Mammary epithelial cell (primary cell): ENCODE measurements at regions of chr7 and their contacts with region 1.

Region 1: DNA sequence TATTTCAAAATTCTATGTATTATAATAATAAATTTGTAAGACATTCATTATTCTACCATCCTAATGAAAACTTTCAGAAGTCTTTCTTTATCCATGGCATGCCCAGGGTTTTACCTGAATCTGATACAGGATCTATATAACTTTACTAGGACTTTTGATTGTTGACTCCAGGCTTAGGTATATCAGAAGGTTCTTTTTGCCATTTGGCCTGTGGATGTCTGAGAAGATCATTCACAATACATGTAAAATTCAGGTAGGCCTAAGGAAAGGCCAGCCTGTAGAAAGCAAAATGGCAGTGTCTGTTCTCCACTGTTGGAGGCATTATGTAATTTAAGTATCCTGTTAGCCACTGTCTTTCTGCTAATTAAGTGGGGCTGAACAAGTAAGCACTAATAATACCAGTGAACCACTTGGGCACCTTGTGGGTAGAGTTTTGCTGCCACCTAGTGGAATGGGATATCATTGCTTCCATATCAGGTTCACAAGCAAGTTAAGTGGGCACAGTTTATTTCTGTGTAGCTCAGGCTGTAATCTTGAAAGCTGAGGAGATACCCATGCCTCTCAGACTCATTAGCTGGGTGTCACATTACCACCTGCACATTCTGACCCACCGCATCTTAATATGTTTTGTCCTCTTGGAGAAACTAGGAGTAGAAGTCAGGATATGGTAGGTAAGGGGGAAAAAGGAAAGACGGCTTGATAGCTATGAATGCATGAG is 105.5 kb downstream of the SEPTIN7 start:
- DNase-seq: peak; percentile 54
- H3K4me3 ChIP-seq: no peak overlapping the region
- H3K27ac ChIP-seq: no peak overlapping the region
- H3K4me1 ChIP-seq: peaks cover 10% of the 10 kb centered on the region
- H3K27me3 ChIP-seq: no peaks in the 10 kb centered on the region
- CTCF ChIP-seq: peak; percentile 88 to 90

Region 2: DNA sequence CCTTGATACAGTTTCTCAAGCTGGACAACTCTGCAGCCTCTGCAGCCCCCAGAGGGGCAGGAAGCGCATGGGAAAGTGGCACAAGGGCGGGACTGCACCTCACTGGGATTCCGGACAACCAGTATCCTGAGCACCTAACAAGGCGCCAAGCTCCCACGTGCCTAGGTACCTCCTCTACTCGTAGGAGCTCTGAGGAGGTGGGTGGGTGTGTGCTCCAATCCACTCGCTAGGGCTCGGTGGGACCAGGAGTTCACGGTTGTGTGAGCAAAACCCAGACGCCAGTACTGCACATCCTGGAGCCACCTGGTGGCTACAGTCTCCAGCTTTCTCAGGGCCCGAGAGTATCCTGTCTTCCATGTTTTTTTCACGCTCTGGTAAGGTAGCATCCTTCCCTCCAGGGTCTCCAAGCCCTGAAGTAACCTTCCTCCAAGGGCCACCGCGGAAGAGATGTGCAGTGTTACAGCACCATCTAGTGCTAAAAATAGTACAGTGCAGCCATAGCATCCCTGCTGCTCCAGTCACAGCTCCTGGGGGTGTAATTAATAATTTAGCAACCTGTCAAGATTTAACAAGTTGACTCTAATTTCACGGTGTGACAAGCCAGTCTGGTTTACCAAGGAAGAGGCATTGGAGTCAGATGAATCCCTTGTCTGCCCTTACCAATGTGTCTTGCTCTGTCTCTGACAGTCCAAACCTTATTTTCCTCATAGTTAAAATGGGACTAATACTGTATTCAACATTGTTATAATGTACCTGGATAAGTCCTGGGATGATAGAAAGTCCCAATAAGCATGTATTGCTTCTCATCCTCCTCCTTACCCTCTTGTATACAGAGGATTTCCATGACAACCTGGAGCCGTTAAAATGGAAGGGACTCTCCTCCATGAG is 281.8 kb before region 1 on chr7:
- CTCF ChIA-PET with region 1: no interaction called
- dilution Hi-C with region 1: no loop called
- in situ Hi-C with region 1: no loop called
- intact Hi-C with region 1: loop called (anchors 5 kb)
- DNase-seq: peak; percentile 19
- H3K4me3 ChIP-seq: no peak overlapping the region
- H3K27ac ChIP-seq: no peak overlapping the region
- H3K4me1 ChIP-seq: no peaks in the 10 kb centered on the region
- H3K27me3 ChIP-seq: no peaks in the 10 kb centered on the region
- CTCF ChIP-seq: peak; percentile 82 to 84

Region 3: DNA sequence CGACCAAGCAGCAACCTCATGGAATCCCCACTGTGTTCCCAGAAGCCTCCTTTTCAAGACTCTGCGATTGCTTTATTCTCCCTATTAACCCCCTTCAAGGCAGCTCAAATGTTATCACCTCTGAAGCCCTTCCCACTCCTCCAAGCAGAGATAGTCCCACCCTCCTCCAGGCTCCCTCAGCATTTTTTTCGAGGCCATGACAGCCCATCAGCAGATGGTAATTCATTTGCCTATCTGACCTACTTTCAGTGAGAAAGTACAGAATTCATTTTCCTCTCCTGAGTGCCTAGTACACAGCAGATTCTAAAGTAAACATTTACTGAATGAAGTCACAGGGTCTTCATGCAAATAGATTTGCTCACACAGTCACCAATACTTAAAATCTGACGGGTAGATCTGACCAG is 259.2 kb before region 1 on chr7:
- CTCF ChIA-PET with region 1: no interaction called
- dilution Hi-C with region 1: no loop called
- in situ Hi-C with region 1: no loop called
- intact Hi-C with region 1: loop called (anchors 5 kb)
- DNase-seq: no peak
- H3K4me3 ChIP-seq: no peak overlapping the region
- H3K27ac ChIP-seq: no peak overlapping the region
- H3K4me1 ChIP-seq: no peaks in the 10 kb centered on the region
- H3K27me3 ChIP-seq: no peaks in the 10 kb centered on the region
- CTCF ChIP-seq: no peak

Region 4: GRCh38 chr7:35707422-35707821 is 198.9 kb before region 1 on chr7:
- CTCF ChIA-PET with region 1: no interaction called
- dilution Hi-C with region 1: no loop called
- in situ Hi-C with region 1: loop called (anchors 5 kb)
- intact Hi-C with region 1: loop called (anchors 1 kb)
- DNase-seq: no peak
- H3K4me3 ChIP-seq: no peak overlapping the region
- H3K27ac ChIP-seq: no peak overlapping the region
- H3K4me1 ChIP-seq: no peaks in the 10 kb centered on the region
- H3K27me3 ChIP-seq: no peaks in the 10 kb centered on the region
- CTCF ChIP-seq: no peak

Region 5: DNA sequence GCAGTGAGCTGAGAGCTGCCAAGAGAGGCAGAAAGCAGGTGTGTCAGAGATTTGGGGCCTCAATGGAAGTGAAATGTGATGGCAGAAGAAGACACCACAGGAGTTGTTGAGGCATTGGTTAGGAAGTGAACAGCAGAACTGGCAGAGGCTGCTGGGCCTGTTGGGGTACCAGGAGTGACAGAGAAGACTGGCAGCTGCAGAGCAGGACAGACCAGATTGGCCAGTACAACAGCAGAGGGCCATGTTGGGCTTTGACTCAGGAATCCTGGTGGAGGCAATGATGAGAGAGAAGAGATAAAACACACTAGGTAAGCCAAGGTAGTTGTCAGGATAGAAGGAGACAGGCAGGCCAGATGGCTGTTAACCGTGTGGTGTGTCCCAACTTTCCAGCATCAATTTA is 191.5 kb before region 1 on chr7:
- CTCF ChIA-PET with region 1: no interaction called
- dilution Hi-C with region 1: no loop called
- in situ Hi-C with region 1: loop called in 1 of 2 experiments (anchors 5 kb)
- intact Hi-C with region 1: no loop called
- DNase-seq: no peak
- H3K4me3 ChIP-seq: no peak overlapping the region
- H3K27ac ChIP-seq: no peak overlapping the region
- H3K4me1 ChIP-seq: no peaks in the 10 kb centered on the region
- H3K27me3 ChIP-seq: no peaks in the 10 kb centered on the region
- CTCF ChIP-seq: peak in 1 of 2 donors; percentile 10

Region 6: DNA sequence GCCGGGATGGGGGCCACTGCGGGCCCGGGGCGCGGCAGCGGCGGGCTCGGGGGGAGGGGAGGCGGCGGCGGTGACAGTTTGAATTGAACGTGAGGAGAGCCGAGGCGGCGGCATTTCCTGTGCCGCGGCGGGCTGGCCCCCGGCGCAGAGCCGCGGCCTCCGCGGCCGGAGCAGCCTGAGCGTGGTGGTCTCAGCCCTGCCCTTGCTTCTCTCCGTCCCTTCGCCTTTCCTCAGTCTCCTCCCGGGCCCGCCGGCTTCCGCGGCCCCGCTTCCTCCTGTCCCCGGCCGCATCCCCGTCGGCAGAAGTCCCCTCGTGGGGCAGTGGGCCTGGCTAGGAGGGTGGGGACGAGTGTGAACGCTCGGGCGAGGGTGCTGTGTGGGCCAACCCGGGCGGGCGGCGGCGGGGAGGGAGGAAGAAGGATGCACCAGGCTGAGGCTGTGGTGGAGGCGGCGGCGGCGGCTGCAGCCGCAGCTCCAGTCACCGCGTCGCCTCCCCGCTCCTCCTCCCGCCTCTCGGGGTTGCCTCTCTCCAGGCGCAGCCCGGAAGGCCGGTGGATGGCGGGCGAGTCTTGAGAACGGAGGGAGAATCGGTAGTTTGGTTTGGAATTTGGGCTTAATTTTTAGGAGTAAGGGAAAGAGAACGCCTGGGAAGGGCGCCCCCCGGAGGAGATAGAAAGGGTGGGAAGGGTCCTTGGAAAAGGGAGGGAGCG is 104.8 kb before region 1 on chr7:
- CTCF ChIA-PET with region 1: interaction called, 3 read pairs
- dilution Hi-C with region 1: no loop called
- in situ Hi-C with region 1: no loop called
- intact Hi-C with region 1: loop called (anchors 1 kb)
- DNase-seq: peak; percentile 70
- H3K4me3 ChIP-seq: peak overlapping the region; percentile 95
- H3K27ac ChIP-seq: peak overlapping the region; percentile 91
- H3K4me1 ChIP-seq: peaks cover 14% of the 10 kb centered on the region
- H3K27me3 ChIP-seq: no peaks in the 10 kb centered on the region
- CTCF ChIP-seq: peak; percentile 33 to 62

Region 7: DNA sequence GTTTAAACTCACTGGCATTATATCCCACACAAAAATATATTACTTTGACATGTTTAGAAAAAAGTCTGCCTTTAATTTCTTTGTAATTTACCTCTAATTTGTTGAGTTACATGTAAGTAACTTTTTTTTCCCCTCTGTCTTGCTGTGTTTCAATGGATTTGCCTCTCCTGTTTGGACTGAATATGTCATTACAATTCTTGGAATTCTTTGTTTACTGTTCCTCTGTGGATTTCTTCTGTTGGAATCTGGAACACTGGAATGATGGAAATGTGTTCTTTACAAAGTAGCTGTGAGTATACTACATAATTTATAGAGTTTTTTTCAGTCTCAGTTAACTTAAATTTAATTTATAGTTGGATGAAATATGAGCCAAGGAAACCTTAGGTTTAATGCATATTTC is 75.1 kb before region 1 on chr7:
- CTCF ChIA-PET with region 1: no interaction called
- dilution Hi-C with region 1: no loop called
- in situ Hi-C with region 1: no loop called
- intact Hi-C with region 1: no loop called
- DNase-seq: no peak
- H3K4me3 ChIP-seq: no peak overlapping the region
- H3K27ac ChIP-seq: no peak overlapping the region
- H3K4me1 ChIP-seq: peaks cover 16% of the 10 kb centered on the region
- H3K27me3 ChIP-seq: no peaks in the 10 kb centered on the region
- CTCF ChIP-seq: no peak